Activated CD8-positive, alpha-beta T cell treated with anti-CD3 and anti-CD28 coated beads, Interleukin-2, amount 10 ng/mL, durations not matched to agents 7 days and 5 days (primary cell): ENCODE measurements at regions of chr14 and their contacts with region 1.

Region 1: DNA sequence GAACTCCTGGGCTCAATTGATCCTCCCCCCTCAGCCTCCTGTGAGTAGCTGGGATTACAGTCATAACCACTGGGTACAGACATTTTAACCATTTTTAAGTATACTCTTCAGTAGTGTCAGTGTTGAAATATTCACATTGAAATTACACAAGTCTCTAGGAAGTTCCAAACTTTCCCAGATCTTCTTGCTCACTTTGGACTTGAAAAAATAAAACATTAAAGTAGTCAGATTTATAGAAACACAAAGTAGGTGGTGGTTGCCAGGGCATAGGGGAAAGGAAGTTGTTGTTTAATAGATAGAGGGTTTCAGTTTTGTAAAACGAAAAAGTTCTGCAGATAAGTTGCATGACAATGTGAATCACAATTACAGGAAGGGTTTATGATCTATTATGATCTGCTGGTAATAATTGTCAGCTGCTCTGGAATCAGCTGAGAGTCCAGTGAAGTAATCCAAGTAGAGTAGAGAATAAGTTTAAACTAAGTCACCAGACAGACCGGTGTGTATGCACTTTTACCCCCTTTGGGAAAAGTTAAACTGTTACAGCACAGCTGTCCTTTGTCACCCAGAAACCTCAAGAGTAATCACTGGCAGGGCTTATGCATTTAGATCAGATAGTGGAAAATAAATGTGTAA is 27.4 kb downstream of the PCNX1 start:
- DNase-seq: no peak
- ATAC-seq: peak; percentile 85
- H3K4me3 Mint-ChIP-seq: peak overlapping the region; percentile 47
- H3K27ac Mint-ChIP-seq: peak overlapping the region; percentile 77
- H3K4me1 Mint-ChIP-seq: peaks cover 54% of the 10 kb centered on the region
- H3K27me3 Mint-ChIP-seq: no peaks in the 10 kb centered on the region

Region 2: GRCh38 chr14:70919774-70920173 is 14.8 kb before region 1 on chr14:
- CTCF ChIA-PET with region 1: interaction called, 25 read pairs
- POLR2A ChIA-PET with region 1: no interaction called
- DNase-seq: no peak
- ATAC-seq: peak; percentile 32
- H3K4me3 Mint-ChIP-seq: peak overlapping the region; percentile 37
- H3K27ac Mint-ChIP-seq: peak overlapping the region; percentile 84
- H3K4me1 Mint-ChIP-seq: peaks cover 82% of the 10 kb centered on the region
- H3K27me3 Mint-ChIP-seq: no peaks in the 10 kb centered on the region